Psoas muscle (tissue), 8 donors: ENCODE measurements at regions of chr1 and their contacts with region 1.

Region 1: GRCh38 chr1:3618881-3619671 is 5.7 kb upstream of the TPRG1L start:
- DNase-seq: peak; percentile 50 to 76
- ATAC-seq: peak; percentile 74 to 87 (median 82)
- H3K4me3 ChIP-seq: no peak overlapping the region
- H3K27ac ChIP-seq: no peak overlapping the region
- H3K4me1 ChIP-seq: peaks cover 9% of the 10 kb centered on the region
- H3K27me3 ChIP-seq: no peaks in the 10 kb centered on the region
- CTCF ChIP-seq: peak; percentile 89

Region 2: DNA sequence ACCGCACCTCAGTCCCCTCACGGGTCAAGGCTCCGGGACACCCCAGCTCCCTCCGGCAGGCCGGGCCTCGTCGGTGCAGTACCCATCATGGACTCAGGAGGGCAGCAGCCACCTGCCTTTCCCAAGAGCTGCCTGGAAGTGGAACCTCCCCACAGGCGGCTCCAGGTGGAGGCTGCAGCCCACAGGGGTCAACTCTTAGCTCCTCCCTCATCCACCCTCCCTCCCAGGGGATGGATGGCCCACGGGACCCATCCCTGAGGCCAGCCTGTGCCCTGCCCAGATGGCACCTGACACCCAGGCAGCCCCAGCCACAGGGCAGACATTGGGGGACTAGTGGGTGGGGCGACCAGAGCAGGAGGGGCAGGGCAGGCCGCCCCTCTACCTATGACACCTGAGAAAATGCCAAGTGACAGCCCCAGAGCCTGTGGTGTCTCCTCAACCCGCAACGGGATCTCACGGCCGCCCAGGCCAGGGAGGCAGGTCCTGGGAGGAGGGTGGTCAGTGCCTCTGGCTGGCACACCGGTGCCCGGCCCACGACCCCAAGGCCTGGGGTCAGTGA is 165.8 kb before region 1 on chr1:
- intact Hi-C with region 1: loop called in 1 of 2 experiments (anchors 2 kb)
- DNase-seq: peak; percentile 71 to 84
- ATAC-seq: peak; percentile 85 to 92 (median 89)
- H3K4me3 ChIP-seq: no peak overlapping the region
- H3K27ac ChIP-seq: no peak overlapping the region
- H3K4me1 ChIP-seq: peaks cover 21% of the 10 kb centered on the region
- H3K27me3 ChIP-seq: peaks cover 0 to 8% (median 0%) of the 10 kb centered on the region in 3 donors
- CTCF ChIP-seq: peak; percentile 98

Region 3: DNA sequence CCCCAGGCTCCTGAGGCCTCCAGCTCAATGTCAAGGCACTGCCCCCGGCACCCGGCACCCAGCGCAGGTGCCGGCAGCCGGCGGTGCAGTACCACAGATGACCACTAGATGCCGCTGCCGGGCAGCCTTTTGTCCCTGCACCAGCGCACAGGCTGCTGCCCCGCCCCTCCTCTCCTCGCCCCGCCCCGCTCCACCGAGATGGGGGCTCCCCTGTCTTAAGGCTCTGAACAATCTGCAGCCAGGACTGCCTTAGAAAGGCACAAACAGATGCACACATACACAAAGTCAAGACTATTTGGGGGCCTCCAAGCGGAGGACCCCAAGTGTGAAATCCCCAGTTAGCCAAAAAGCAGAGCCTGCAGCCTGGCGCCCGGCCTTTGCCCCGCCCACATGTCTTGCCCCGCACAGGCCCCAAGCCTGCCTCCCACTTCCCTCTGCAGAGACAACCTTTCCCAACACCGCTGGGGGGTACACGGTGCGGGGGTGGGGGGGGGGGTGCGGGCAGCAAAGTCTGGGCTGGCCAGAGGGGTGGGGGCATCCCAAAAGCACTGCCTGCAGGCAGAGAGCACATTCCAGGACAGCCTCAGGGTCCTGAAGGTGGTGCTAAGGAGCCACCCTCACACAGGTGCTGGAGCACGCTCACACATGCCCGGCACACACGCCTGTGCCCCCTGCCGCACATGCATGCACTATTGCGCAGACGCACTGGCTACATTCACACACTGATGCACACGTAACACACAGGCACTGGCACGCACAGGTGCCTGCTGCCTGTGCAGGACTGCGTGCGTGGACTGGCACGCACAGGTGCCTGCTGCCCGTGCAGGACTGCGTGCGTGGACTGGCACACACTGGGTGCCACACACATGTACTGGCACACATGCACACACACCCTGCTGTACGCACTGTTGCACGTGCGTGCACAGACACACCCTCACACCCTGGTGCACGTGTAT is 127.5 kb before region 1 on chr1:
- intact Hi-C with region 1: loop called (anchors 1 to 2 kb)
- DNase-seq: peak; percentile 77 to 88
- ATAC-seq: peak; percentile 80 to 95 (median 90)
- H3K4me3 ChIP-seq: no peak overlapping the region
- H3K27ac ChIP-seq: no peak overlapping the region
- H3K4me1 ChIP-seq: no peaks in the 10 kb centered on the region
- H3K27me3 ChIP-seq: peaks cover 0 to 2% (median 0%) of the 10 kb centered on the region in 3 donors
- CTCF ChIP-seq: peak; percentile 100

Region 4: DNA sequence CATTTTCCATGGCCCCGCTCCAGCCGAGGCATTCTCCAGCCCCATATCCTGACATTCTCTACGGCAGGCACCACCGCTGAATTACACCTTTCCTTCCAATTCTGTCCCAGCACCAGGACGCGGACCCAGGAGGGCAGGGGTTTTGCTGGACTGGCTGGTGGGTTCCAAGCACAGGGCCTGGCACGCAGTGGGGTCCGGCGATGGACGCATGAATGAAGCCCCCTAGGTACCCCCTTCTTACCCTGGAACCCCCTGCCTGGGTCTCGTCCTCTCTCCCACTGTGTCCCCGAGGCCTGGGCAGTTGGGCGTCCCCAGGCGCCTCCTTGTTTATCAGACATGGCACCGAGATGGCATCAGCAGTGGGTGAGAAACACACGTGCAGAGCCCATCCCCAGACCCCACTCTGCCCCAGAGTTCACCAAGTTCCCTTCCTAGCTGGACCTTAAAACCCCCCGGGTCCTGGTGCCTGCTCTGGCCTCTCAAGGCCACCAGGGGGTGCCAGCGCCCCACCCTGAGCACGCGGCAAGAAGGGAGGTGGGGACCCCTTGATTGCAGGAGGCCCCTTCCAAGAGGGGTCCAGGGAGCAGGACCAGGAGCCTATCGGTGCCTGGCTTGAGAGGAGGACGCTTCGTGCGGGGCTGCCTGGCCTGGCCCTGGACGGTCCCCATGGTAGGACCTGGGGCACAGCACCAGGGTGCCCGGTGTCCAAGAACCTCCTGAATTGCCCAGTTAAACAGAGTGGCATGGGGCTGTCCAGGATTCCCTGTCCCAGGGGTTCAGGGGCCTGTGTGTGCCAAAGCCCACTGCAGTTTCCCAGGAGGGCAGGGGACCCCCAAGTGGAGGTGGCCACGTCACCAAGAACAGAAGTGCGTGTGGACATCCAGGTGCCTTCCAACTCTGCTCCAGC is 53.9 kb before region 1 on chr1:
- intact Hi-C with region 1: loop called (anchors 1 to 2 kb)
- DNase-seq: no peak
- ATAC-seq: peak; percentile 59 to 80 (median 65)
- H3K4me3 ChIP-seq: no peak overlapping the region
- H3K27ac ChIP-seq: no peak overlapping the region
- H3K4me1 ChIP-seq: no peaks in the 10 kb centered on the region
- H3K27me3 ChIP-seq: peaks cover 0 to 5% (median 0%) of the 10 kb centered on the region in 3 donors
- CTCF ChIP-seq: peak; percentile 86